K562 (cell line): ENCODE measurements at regions of chr1 and their contacts with region 1.

Region 1: DNA sequence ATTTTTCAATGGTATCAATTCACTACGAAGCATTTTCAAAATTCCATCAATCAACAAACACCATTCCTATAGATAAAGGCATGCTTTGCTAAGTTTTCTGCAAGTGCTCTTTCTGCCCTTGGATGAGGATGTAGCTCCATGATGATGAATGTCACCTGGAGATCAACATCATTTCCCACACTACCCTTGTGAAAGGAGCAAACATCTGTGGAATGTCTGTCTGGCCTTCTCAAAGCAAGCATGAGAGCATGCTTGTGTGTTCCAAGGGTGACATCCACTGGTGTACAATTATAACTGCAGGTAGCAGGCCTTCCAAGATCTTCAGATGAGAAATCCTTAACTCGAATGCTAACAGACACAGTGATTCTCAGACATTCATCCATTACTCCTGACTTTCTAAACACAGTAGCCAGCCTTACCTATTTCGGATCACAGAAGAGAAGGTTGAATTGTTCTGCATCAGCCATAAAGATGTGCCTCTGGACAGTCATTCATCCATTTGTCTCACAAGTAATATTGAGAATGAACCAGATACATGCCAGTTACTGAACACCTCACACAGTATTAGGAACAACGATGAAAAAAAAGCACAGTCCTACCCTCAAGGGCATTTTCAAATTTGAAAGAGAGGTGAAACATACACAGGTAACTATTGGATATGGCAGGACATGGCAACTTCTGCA is 162.4 kb downstream of the TPR start:
- DNase-seq: peak; percentile 64 to 86 (median 68)
- ATAC-seq: peak; percentile 98
- H3K4me3 ChIP-seq: no peak overlapping the region
- H3K27ac ChIP-seq: no peak overlapping the region
- H3K4me1 ChIP-seq: no peaks in the 10 kb centered on the region
- H3K27me3 ChIP-seq: no peaks in the 10 kb centered on the region
- CTCF ChIP-seq: peak; percentile 86 to 97 (median 87)
- EP300 ChIP-seq: no peak
- POLR2A ChIP-seq: no peak
- RAD21 ChIP-seq: peak; percentile 100

Region 2: DNA sequence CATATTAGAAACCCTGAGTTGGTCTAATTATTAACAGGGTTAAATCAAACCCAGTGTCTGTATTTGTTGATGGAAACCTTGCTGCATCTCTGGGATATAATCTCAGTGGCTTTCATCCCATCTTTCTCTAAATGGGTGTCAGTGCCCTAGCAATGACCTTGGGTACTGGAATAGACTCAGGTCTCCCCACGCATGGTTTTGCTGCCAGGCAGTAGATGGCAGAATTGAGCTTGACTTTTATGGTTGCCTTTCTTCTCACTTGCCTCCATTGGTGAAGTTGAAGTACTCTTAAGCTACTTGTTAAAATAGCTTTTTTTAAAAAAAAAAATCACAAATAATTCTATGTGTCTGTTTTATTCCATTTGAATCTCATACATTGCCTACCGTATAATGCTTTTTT is 560.3 kb before region 1 on chr1:
- CTCF ChIA-PET with region 1: no interaction called
- POLR2A ChIA-PET with region 1: no interaction called
- in situ Hi-C with region 1: no loop called
- intact Hi-C with region 1: loop called (anchors 10 kb)
- DNase-seq: no peak
- ATAC-seq: no peak
- H3K4me3 ChIP-seq: no peak overlapping the region
- H3K27ac ChIP-seq: no peak overlapping the region
- H3K4me1 ChIP-seq: peaks cover 0 to 4% of the 10 kb centered on the region in 2 experiments; a peak in 1 of 5 replicates
- H3K27me3 ChIP-seq: no peaks in the 10 kb centered on the region
- CTCF ChIP-seq: no peak; a peak in 1 of 6 replicates
- EP300 ChIP-seq: no peak
- POLR2A ChIP-seq: no peak
- RAD21 ChIP-seq: no peak

Region 3: DNA sequence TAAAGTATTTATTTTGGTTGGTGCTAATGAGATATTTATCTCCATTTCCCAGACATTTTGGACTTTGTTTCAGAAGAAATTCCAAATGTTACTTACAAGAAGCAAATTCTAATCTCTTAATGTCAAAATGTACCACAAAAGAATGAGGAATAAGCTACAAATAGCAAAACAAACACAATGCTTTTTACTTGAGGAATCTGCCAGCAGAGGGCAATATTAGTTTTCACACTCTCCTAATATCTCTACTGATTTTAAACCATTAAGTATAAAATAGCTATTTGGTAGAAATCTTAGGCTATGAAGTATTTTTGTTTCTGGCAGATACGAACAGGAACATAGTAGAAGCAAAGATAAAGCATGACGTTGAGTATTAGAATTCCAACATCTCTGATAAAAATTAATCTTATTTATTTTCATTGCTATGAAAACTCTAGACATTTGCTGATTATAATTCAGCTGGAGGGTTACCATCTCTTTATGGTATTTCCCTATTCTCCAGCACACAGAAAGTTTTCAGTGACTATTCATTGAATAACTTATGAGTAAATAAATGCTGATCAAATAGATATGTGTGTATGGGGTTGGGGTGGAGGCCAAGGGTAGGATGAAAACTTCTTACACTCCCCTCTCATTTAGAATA is 491.9 kb before region 1 on chr1:
- CTCF ChIA-PET with region 1: interaction called, 8 read pairs
- POLR2A ChIA-PET with region 1: no interaction called
- in situ Hi-C with region 1: no loop called
- intact Hi-C with region 1: loop called (anchors 1 kb)
- DNase-seq: peak in 1 of 4 experiments; percentile 33
- ATAC-seq: no peak
- H3K4me3 ChIP-seq: no peak overlapping the region
- H3K27ac ChIP-seq: no peak overlapping the region
- H3K4me1 ChIP-seq: no peaks in the 10 kb centered on the region
- H3K27me3 ChIP-seq: no peaks in the 10 kb centered on the region
- CTCF ChIP-seq: peak in 2 of 3 experiments; percentile 24 to 56; a peak in 4 of 6 replicates
- EP300 ChIP-seq: no peak
- POLR2A ChIP-seq: no peak
- RAD21 ChIP-seq: peak; percentile 68 to 71

Region 4: DNA sequence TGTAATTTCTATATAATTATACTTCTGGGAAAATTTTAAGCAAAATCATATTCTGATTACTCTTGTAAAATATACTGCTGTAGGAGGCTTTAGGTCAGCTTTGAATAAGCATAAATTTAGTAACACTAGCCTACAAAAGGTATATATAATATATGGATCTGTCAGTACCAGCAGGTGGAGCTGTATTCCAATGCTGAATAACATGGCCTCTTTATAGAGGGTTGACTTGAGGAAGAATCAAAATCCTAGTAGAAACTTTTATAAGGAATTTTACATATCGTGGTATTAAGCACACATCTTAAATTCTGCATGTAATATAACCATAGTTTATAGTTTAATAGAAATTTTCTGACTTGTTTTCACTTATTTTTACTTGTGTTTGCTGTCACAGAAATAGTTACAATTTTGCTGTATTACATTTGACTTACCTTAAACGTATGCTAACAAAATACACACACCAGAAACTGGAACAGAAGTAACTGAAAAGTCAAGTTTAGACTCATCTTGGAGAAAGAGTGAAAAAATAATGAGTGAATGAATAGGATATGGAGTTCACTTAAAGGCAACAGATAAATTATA is 399.2 kb before region 1 on chr1:
- CTCF ChIA-PET with region 1: interaction called, 10 read pairs
- POLR2A ChIA-PET with region 1: no interaction called
- in situ Hi-C with region 1: loop called (anchors 25 kb)
- intact Hi-C with region 1: loop called (anchors 1 kb)
- DNase-seq: peak; percentile 13 to 69 (median 18)
- ATAC-seq: peak; percentile 91
- H3K4me3 ChIP-seq: no peak overlapping the region
- H3K27ac ChIP-seq: no peak overlapping the region
- H3K4me1 ChIP-seq: no peaks in the 10 kb centered on the region
- H3K27me3 ChIP-seq: no peaks in the 10 kb centered on the region
- CTCF ChIP-seq: peak; percentile 44 to 75 (median 44); a peak in 4 of 6 replicates
- EP300 ChIP-seq: no peak
- POLR2A ChIP-seq: no peak
- RAD21 ChIP-seq: peak; percentile 69 to 84

Region 5: GRCh38 chr1:185996211-185996610 is 216.5 kb before region 1 on chr1:
- CTCF ChIA-PET with region 1: interaction called, 6 read pairs
- POLR2A ChIA-PET with region 1: no interaction called
- in situ Hi-C with region 1: no loop called
- intact Hi-C with region 1: loop called (anchors 1 kb)
- DNase-seq: no peak
- ATAC-seq: no peak
- H3K4me3 ChIP-seq: no peak overlapping the region
- H3K27ac ChIP-seq: no peak overlapping the region
- H3K4me1 ChIP-seq: no peaks in the 10 kb centered on the region
- H3K27me3 ChIP-seq: no peaks in the 10 kb centered on the region
- CTCF ChIP-seq: no peak
- EP300 ChIP-seq: no peak
- POLR2A ChIP-seq: no peak
- RAD21 ChIP-seq: no peak

Region 6: GRCh38 chr1:186009039-186009737 is 203.5 kb before region 1 on chr1:
- CTCF ChIA-PET with region 1: no interaction called
- POLR2A ChIA-PET with region 1: no interaction called
- in situ Hi-C with region 1: loop called (anchors 5 kb)
- intact Hi-C with region 1: no loop called
- DNase-seq: no peak
- ATAC-seq: no peak
- H3K4me3 ChIP-seq: no peak overlapping the region
- H3K27ac ChIP-seq: no peak overlapping the region
- H3K4me1 ChIP-seq: no peaks in the 10 kb centered on the region
- H3K27me3 ChIP-seq: no peaks in the 10 kb centered on the region
- CTCF ChIP-seq: no peak
- EP300 ChIP-seq: no peak
- POLR2A ChIP-seq: no peak
- RAD21 ChIP-seq: no peak

Region 7: GRCh38 chr1:186155594-186155993 is 57.1 kb before region 1 on chr1:
- CTCF ChIA-PET with region 1: interaction called, 9 read pairs
- POLR2A ChIA-PET with region 1: no interaction called
- in situ Hi-C with region 1: no loop called
- intact Hi-C with region 1: loop called (anchors 1 kb)
- DNase-seq: peak in 2 of 4 experiments; percentile 30 to 60
- ATAC-seq: peak; percentile 88
- H3K4me3 ChIP-seq: no peak overlapping the region
- H3K27ac ChIP-seq: no peak overlapping the region
- H3K4me1 ChIP-seq: no peaks in the 10 kb centered on the region
- H3K27me3 ChIP-seq: no peaks in the 10 kb centered on the region
- CTCF ChIP-seq: peak; percentile 59 to 80 (median 65); a peak in 5 of 6 replicates
- EP300 ChIP-seq: no peak
- POLR2A ChIP-seq: no peak
- RAD21 ChIP-seq: peak; percentile 89 to 95

Region 8: DNA sequence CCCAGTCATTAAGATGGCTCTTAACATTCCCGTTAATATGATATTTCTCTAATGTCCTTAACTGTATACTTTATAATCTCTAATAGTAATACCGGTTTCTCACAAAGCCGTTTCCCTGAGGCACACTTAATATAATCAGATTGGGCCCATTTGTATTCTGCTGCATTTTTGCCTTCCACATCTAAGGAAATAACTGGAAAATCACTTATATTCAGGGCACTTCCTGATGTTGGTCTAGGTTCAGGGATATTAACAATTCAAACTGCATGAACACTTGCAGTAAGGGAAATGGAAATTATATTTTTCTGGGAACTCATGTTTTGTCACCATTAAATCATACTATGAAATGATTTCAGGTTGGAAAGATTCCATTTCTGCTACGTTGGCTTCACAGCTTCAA is 42.6 kb after region 1 on chr1:
- CTCF ChIA-PET with region 1: no interaction called
- POLR2A ChIA-PET with region 1: no interaction called
- in situ Hi-C with region 1: no loop called
- intact Hi-C with region 1: no loop called
- DNase-seq: no peak
- ATAC-seq: no peak
- H3K4me3 ChIP-seq: no peak overlapping the region
- H3K27ac ChIP-seq: no peak overlapping the region
- H3K4me1 ChIP-seq: no peaks in the 10 kb centered on the region
- H3K27me3 ChIP-seq: no peaks in the 10 kb centered on the region
- CTCF ChIP-seq: no peak
- EP300 ChIP-seq: no peak
- POLR2A ChIP-seq: no peak
- RAD21 ChIP-seq: no peak